ENCODE measurements at regions of chr4 and their contacts with region 1.

Region 1: GRCh38 chr4:122922877-122923511 is 597 bp upstream of the NUDT6 start:
- DNase-seq: peak; percentile 90
- H3K4me3 Mint-ChIP-seq: no peak overlapping the region
- H3K27ac Mint-ChIP-seq: peak overlapping the region; percentile 96
- H3K4me1 Mint-ChIP-seq: peaks cover 16% of the 10 kb centered on the region
- H3K27me3 Mint-ChIP-seq: no peaks in the 10 kb centered on the region

Region 2: GRCh38 chr4:122151982-122152710 is 770.8 kb before region 1 on chr4 and contains the start of gene BLTP1:
- intact Hi-C with region 1: loop called (anchors 2 kb)
- DNase-seq: peak; percentile 89
- H3K4me3 Mint-ChIP-seq: peak within 1 kb of the TSS; percentile 97
- H3K27ac Mint-ChIP-seq: peak within 1 kb of the TSS; percentile 98
- H3K4me1 Mint-ChIP-seq: peaks cover 61% of the 10 kb centered on the region
- H3K27me3 Mint-ChIP-seq: no peaks in the 10 kb centered on the region
- total RNA-seq, gene BLTP1: 25.4 and 30.8 TPM in 2 replicates

Region 3: DNA sequence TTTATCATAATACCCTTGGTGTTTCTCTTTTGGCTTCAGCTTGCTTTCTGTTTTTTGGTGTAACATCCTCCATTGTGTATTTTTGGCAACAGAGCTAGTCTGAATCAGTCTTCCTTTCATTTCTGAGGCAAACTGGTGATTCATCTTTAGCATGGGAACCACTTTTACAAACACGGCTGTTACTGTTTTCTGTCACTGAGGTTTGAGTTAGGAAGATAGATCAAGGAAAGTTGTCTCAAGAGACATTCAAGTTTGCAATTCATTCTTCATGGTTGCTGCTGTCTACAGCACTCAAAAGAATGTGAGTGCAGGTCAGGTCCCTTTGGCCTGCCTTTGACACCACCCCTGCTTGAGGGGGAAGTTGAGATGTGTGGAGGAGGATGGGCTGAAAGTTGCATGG is 338.5 kb before region 1 on chr4:
- intact Hi-C with region 1: loop called (anchors 1 kb)
- DNase-seq: peak; percentile 38
- H3K4me3 Mint-ChIP-seq: peak overlapping the region; percentile 62
- H3K27ac Mint-ChIP-seq: peak overlapping the region; percentile 94
- H3K4me1 Mint-ChIP-seq: peaks cover 70% of the 10 kb centered on the region
- H3K27me3 Mint-ChIP-seq: peaks cover 3% of the 10 kb centered on the region

Region 4: GRCh38 chr4:122716825-122717448 is 206.1 kb before region 1 on chr4:
- intact Hi-C with region 1: loop called (anchors 2 kb)
- DNase-seq: peak; percentile 55
- H3K4me3 Mint-ChIP-seq: peak overlapping the region; percentile 25
- H3K27ac Mint-ChIP-seq: peak overlapping the region; percentile 81
- H3K4me1 Mint-ChIP-seq: peaks cover 46% of the 10 kb centered on the region
- H3K27me3 Mint-ChIP-seq: peaks cover 2% of the 10 kb centered on the region

Region 5: GRCh38 chr4:122764821-122765215 is 158.2 kb before region 1 on chr4:
- intact Hi-C with region 1: loop called (anchors 1 kb)
- DNase-seq: no peak
- H3K4me3 Mint-ChIP-seq: peak overlapping the region; percentile 43
- H3K27ac Mint-ChIP-seq: peak overlapping the region; percentile 79
- H3K4me1 Mint-ChIP-seq: peaks cover 45% of the 10 kb centered on the region
- H3K27me3 Mint-ChIP-seq: no peaks in the 10 kb centered on the region

Region 6: GRCh38 chr4:122912810-122913575 is 10.0 kb before region 1 on chr4:
- intact Hi-C with region 1: no loop called
- DNase-seq: no peak
- H3K4me3 Mint-ChIP-seq: no peak overlapping the region
- H3K27ac Mint-ChIP-seq: no peak overlapping the region
- H3K4me1 Mint-ChIP-seq: peaks cover 10% of the 10 kb centered on the region
- H3K27me3 Mint-ChIP-seq: no peaks in the 10 kb centered on the region

Region 7: GRCh38 chr4:122980860-122981259 is 57.9 kb after region 1 on chr4:
- intact Hi-C with region 1: no loop called
- DNase-seq: no peak
- H3K4me3 Mint-ChIP-seq: no peak overlapping the region
- H3K27ac Mint-ChIP-seq: no peak overlapping the region
- H3K4me1 Mint-ChIP-seq: no peaks in the 10 kb centered on the region
- H3K27me3 Mint-ChIP-seq: no peaks in the 10 kb centered on the region

Region 8: GRCh38 chr4:123037804-123038203 is 114.8 kb after region 1 on chr4:
- intact Hi-C with region 1: no loop called
- DNase-seq: no peak
- H3K4me3 Mint-ChIP-seq: no peak overlapping the region
- H3K27ac Mint-ChIP-seq: no peak overlapping the region
- H3K4me1 Mint-ChIP-seq: no peaks in the 10 kb centered on the region
- H3K27me3 Mint-ChIP-seq: no peaks in the 10 kb centered on the region

Region 9: GRCh38 chr4:123396307-123397143 is 473.5 kb after region 1 on chr4 and contains the start of gene SPRY1:
- intact Hi-C with region 1: loop called (anchors 5 kb)
- DNase-seq: peak; percentile 77
- H3K4me3 Mint-ChIP-seq: peak within 1 kb of the TSS; percentile 96
- H3K27ac Mint-ChIP-seq: peak within 1 kb of the TSS; percentile 96
- H3K4me1 Mint-ChIP-seq: peaks cover 42% of the 10 kb centered on the region
- H3K27me3 Mint-ChIP-seq: peaks cover 14% of the 10 kb centered on the region
- total RNA-seq, gene SPRY1: 47.6 and 49.0 TPM in 2 replicates